ENCODE measurements at regions of chr15 and their contacts with region 1.

Region 1: DNA sequence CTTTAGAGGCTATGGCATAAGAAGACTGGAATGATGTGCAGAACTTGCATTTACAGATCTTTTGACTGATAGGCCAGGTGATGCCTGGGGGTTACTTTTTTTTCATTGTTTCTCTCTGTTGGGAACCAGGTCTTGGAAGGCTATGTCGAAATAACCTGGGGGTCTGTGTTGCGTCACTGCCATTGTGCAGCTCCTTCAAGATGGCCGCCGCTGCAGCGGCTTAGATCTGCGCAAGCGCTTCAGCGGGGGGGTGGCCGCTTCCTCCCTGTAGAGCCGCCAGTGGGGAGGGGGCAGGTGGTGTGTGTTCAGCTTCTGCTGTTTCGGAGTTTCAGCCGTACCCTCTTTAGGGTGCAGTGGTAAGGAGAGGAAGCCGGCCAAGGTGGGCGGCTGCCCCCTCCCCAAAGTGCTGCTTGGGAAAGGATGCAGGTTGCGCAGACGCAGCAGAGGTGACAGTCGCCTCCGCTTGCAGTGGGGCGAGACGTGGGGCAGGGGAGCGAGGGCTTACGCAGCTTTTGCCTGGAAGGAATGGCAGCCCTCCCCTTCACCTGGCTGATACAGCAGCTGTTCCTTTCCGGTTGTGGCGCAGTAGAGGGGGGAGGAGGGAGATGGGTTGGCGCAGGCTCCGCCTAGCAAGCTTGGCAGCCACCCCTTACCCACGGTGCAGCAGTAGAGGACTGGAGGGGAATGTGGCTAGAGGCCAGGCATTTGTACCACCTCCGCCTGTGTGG is 1.5 kb downstream of the SNRPN start:
- DNase-seq: peak; percentile 40
- ATAC-seq: peak; percentile 73
- H3K4me3 Mint-ChIP-seq: peak overlapping the region; percentile 91
- H3K27ac Mint-ChIP-seq: peak overlapping the region; percentile 84
- H3K4me1 Mint-ChIP-seq: peaks cover 23% of the 10 kb centered on the region
- H3K27me3 Mint-ChIP-seq: no peaks in the 10 kb centered on the region
- CTCF ChIP-seq: no peak

Region 2: GRCh38 chr15:23828786-23829185 is 1127.5 kb before region 1 on chr15:
- CTCF ChIA-PET with region 1: no interaction called
- POLR2A ChIA-PET with region 1: no interaction called
- intact Hi-C with region 1: no loop called
- DNase-seq: no peak
- ATAC-seq: no peak
- H3K4me3 Mint-ChIP-seq: no peak overlapping the region
- H3K27ac Mint-ChIP-seq: no peak overlapping the region
- H3K4me1 Mint-ChIP-seq: no peaks in the 10 kb centered on the region
- H3K27me3 Mint-ChIP-seq: no peaks in the 10 kb centered on the region
- CTCF ChIP-seq: no peak

Region 3: GRCh38 chr15:24772686-24773373 is 183.4 kb before region 1 on chr15:
- CTCF ChIA-PET with region 1: no interaction called
- POLR2A ChIA-PET with region 1: no interaction called
- intact Hi-C with region 1: loop called (anchors 2 kb)
- DNase-seq: peak; percentile 19
- ATAC-seq: peak; percentile 42
- H3K4me3 Mint-ChIP-seq: peak overlapping the region; percentile 81
- H3K27ac Mint-ChIP-seq: no peak overlapping the region
- H3K4me1 Mint-ChIP-seq: peaks cover 2% of the 10 kb centered on the region
- H3K27me3 Mint-ChIP-seq: peaks cover 2% of the 10 kb centered on the region
- CTCF ChIP-seq: no peak

Region 4: DNA sequence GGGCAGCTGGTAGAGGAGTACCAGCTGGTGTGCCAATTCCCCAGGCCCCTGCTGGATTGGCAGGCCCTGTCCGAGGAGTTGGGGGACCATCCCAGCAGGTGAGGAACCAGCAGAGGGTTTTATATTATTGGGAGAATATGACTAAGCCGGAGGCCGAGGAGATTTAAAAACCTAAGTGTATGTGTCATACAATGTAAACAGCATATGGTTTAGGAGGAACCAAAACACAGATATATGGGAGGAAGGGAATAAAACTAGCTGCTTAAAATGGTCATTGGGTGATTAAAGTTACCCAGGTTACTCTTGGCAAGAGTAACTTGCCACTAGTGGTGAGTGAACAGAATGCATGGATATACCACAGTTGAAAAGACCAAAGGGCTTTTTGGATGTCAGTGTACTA is 20.7 kb after region 1 on chr15:
- CTCF ChIA-PET with region 1: no interaction called
- POLR2A ChIA-PET with region 1: interaction called, 11 read pairs
- intact Hi-C with region 1: no loop called
- DNase-seq: no peak
- ATAC-seq: no peak
- H3K4me3 Mint-ChIP-seq: no peak overlapping the region
- H3K27ac Mint-ChIP-seq: no peak overlapping the region
- H3K4me1 Mint-ChIP-seq: no peaks in the 10 kb centered on the region
- H3K27me3 Mint-ChIP-seq: no peaks in the 10 kb centered on the region
- CTCF ChIP-seq: no peak

Region 5: GRCh38 chr15:25056484-25057425 is 100.5 kb after region 1 on chr15:
- CTCF ChIA-PET with region 1: no interaction called
- POLR2A ChIA-PET with region 1: no interaction called
- intact Hi-C with region 1: no loop called
- DNase-seq: no peak
- ATAC-seq: no peak
- H3K4me3 Mint-ChIP-seq: no peak overlapping the region
- H3K27ac Mint-ChIP-seq: no peak overlapping the region
- H3K4me1 Mint-ChIP-seq: no peaks in the 10 kb centered on the region
- H3K27me3 Mint-ChIP-seq: no peaks in the 10 kb centered on the region
- CTCF ChIP-seq: no peak

Region 6: DNA sequence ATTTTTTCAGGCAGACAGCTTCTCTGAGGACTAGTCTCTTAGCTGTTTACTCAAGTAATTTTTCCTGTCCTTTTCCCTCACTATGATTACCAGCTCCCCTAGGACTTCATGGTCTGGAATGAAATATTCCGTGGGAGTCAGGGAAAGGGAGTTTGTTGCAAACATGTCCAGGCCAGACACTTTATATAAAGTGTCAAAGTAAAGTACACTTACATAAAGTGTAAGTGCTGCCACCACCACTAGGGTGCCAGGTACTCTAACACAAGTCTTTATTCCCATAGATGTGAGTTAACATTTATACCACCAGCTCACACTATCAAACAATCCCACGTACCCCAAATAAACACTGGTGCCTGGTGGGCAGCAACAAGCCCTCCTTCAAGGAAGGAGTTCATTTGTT is 178.3 kb after region 1 on chr15:
- CTCF ChIA-PET with region 1: no interaction called
- POLR2A ChIA-PET with region 1: no interaction called
- intact Hi-C with region 1: no loop called
- DNase-seq: no peak
- ATAC-seq: no peak
- H3K4me3 Mint-ChIP-seq: no peak overlapping the region
- H3K27ac Mint-ChIP-seq: no peak overlapping the region
- H3K4me1 Mint-ChIP-seq: no peaks in the 10 kb centered on the region
- H3K27me3 Mint-ChIP-seq: no peaks in the 10 kb centered on the region
- CTCF ChIP-seq: no peak

Region 7: DNA sequence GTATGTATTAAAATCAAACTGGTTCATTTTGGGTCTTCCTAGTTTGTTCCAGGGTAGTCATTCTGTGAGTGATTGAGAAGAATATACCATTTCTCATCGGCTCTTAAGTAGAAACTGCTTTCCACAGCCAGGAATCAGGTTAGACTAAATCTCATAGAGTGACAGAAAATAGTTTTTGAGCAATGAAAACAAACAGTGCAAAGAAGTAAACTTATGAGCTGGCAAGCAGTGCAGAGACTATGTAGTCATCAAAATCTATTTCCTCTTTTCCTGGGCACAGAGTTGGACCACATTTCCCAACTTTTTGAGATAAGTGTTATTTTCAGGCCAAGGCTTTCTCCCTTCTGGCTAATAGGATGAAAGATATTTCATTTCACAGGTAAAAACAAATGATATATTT is 416.0 kb after region 1 on chr15:
- CTCF ChIA-PET with region 1: no interaction called
- POLR2A ChIA-PET with region 1: no interaction called
- intact Hi-C with region 1: loop called (anchors 10 kb)
- DNase-seq: no peak
- ATAC-seq: no peak
- H3K4me3 Mint-ChIP-seq: no peak overlapping the region
- H3K27ac Mint-ChIP-seq: no peak overlapping the region
- H3K4me1 Mint-ChIP-seq: peaks cover 2% of the 10 kb centered on the region
- H3K27me3 Mint-ChIP-seq: no peaks in the 10 kb centered on the region
- CTCF ChIP-seq: no peak

Region 8: DNA sequence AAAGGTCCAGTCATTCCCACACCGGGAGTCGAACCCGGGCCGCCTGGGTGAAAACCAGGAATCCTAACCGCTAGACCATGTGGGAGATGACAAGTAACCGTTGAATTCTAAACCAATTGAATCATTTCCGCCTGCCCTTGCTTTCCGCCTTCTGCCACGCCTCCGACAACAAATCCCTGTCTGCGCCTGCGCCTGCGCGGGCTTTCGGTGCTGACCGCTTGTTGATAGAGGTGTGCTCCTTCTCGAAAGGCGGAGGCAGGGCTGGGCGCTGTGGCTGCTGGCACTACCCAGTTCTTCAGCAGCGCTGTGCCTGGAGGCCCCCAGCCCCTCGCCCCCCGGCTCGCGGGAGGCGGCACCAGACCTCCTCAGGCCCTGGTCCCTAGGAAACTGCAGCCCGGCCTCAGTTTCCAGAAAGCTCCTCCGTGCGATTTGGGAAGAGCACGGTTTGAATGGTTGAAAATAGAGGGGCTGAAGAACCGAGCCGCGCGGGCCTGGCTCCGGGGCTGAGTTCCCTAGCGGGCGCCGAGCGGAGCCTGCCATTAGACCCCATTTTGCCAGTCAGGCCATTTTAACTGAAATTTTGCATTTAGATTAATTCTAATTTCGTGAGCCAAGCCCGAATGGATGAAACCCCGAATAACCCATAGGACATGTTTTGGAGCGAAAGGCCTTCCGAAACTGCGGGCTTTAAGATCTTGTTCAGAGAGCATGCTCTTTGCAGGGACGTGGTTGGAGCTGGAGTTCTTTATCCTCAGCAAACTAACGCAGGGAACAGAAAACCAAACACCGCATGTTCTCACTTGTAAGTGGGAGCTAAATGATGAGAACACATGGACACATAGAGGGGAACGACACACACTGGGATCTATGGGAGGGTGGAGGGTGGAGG is 1126.2 kb after region 1 on chr15:
- CTCF ChIA-PET with region 1: no interaction called
- POLR2A ChIA-PET with region 1: no interaction called
- intact Hi-C with region 1: loop called (anchors 5 kb)
- DNase-seq: peak; percentile 78
- ATAC-seq: peak; percentile 96
- H3K4me3 Mint-ChIP-seq: peak overlapping the region; percentile 82
- H3K27ac Mint-ChIP-seq: peak overlapping the region; percentile 90
- H3K4me1 Mint-ChIP-seq: peaks cover 29% of the 10 kb centered on the region
- H3K27me3 Mint-ChIP-seq: no peaks in the 10 kb centered on the region
- CTCF ChIP-seq: no peak

Measured in activated B cell treated with CpG ODN at 0.5 μM for 24 hours (primary cell).